PC-9 (cell line): ENCODE measurements at regions of chr5 and their contacts with region 1.

Region 1: DNA sequence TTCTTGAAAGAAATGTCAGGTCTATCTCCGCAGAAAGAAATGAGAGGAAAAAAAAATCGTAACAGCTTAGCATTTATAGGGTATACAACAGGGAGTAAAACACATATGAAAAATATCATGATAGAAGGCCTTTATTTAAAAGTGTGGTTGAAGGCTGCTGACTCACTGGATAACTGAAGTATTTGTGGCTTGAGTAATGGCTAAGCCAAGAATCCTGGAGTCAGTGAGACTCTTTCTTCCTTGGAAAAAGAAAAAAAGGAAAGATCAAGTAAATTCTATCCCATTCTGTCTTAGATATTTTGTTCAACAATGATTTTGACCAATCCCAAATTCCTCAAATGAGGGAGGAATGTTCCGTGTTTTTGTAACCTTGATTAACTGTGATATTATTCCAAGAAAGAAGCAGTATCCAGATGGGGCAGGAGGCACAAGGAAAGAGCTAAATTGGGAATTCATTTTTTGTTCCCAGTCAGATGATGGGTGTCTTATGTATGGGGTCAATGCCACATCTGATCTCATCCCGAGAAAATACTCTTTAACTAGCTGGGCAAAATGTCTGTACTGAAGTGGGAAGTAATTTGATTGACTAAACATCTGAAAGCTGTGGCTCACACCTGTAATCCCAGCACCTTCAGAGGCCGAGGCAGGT is 64.3 kb upstream of the MYO10 start:
- DNase-seq: peak; percentile 41 to 86
- H3K4me3 ChIP-seq: no peak overlapping the region
- H3K27ac ChIP-seq: peak overlapping the region; percentile 45
- H3K4me1 ChIP-seq: peaks cover 12% of the 10 kb centered on the region
- H3K27me3 ChIP-seq: no peaks in the 10 kb centered on the region
- CTCF ChIP-seq: no peak

Region 2: GRCh38 chr5:16970826-16971225 is 29.6 kb before region 1 on chr5:
- CTCF ChIA-PET with region 1: no interaction called
- POLR2A ChIA-PET with region 1: no interaction called
- intact Hi-C with region 1: no loop called
- DNase-seq: no peak
- H3K4me3 ChIP-seq: no peak overlapping the region
- H3K27ac ChIP-seq: no peak overlapping the region
- H3K4me1 ChIP-seq: no peaks in the 10 kb centered on the region
- H3K27me3 ChIP-seq: no peaks in the 10 kb centered on the region
- CTCF ChIP-seq: no peak

Region 3: DNA sequence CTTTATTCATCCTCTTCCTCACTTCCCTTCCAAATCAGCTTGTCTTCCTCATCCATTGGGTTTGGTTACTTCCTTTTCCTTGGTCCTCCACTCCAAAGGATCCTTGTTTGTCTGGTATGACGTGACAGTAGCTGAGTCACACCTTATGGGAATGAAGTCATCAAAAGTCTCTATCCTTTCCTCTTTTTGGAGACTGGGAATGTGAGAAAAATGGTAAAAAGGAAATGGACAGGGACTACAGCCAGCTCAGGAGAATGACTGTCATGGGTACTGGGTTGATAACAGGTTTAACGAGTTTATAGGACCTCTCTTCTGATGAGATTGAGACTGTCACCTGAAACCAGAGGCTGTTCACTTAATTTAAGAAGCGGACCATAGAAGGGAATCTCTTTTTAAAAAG is 11.9 kb after region 1 on chr5:
- CTCF ChIA-PET with region 1: no interaction called
- POLR2A ChIA-PET with region 1: interaction called, 3 read pairs
- intact Hi-C with region 1: loop called (anchors 1 kb)
- DNase-seq: peak; percentile 59 to 90
- H3K4me3 ChIP-seq: no peak overlapping the region
- H3K27ac ChIP-seq: peak overlapping the region; percentile 69
- H3K4me1 ChIP-seq: peaks cover 22% of the 10 kb centered on the region
- H3K27me3 ChIP-seq: no peaks in the 10 kb centered on the region
- CTCF ChIP-seq: no peak

Region 4: DNA sequence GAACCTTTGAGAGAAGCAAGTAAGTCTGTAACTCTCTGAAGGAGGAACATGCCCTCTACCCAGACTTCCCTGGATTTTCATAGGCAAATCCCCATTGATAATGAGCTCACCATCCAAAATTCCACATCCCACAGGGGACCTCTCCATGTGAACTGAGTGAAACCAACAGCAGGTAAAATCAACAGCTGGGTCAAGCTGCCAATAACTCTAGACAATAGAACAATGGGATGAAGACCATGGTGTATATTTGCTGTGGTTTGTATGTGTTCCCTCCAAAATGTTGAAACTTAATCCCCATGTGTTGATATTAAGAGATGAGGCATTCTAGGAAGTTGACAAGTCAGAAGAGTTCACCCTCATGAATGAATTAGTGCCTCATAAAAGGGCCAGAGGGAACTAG is 45.9 kb after region 1 on chr5:
- CTCF ChIA-PET with region 1: no interaction called
- POLR2A ChIA-PET with region 1: no interaction called
- intact Hi-C with region 1: no loop called
- DNase-seq: no peak
- H3K4me3 ChIP-seq: no peak overlapping the region
- H3K27ac ChIP-seq: no peak overlapping the region
- H3K4me1 ChIP-seq: no peaks in the 10 kb centered on the region
- H3K27me3 ChIP-seq: no peaks in the 10 kb centered on the region
- CTCF ChIP-seq: no peak

Region 5: DNA sequence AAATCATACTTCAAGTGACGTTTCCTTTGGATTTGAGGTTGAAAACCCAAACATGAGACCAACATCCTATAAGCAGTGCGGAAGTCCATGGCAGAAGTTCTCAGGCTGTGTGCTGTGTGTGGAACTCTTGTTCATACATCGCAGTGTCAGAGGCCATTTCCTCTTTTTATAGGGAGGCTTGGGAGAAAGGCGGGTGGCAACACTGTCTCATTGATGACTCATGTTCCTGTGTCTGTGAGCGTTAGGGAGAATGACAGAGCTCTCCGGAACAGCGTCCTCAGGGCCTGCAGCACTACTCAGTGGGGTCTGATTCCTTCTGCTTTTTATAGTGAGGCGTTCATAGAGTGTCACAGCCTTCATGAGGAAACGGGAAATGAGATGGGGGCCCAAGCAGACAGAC is 118.2 kb after region 1 on chr5:
- CTCF ChIA-PET with region 1: interaction called, 4 read pairs
- POLR2A ChIA-PET with region 1: interaction called, 13 read pairs
- intact Hi-C with region 1: no loop called
- DNase-seq: peak; percentile 76 to 87
- H3K4me3 ChIP-seq: peak overlapping the region; percentile 20; the same call in 1 of the 2 replicates
- H3K27ac ChIP-seq: peak overlapping the region; percentile 50
- H3K4me1 ChIP-seq: peaks cover 39% of the 10 kb centered on the region
- H3K27me3 ChIP-seq: no peaks in the 10 kb centered on the region
- CTCF ChIP-seq: no peak